ENCODE measurements at regions of chr16 and their contacts with region 1.

Region 1: DNA sequence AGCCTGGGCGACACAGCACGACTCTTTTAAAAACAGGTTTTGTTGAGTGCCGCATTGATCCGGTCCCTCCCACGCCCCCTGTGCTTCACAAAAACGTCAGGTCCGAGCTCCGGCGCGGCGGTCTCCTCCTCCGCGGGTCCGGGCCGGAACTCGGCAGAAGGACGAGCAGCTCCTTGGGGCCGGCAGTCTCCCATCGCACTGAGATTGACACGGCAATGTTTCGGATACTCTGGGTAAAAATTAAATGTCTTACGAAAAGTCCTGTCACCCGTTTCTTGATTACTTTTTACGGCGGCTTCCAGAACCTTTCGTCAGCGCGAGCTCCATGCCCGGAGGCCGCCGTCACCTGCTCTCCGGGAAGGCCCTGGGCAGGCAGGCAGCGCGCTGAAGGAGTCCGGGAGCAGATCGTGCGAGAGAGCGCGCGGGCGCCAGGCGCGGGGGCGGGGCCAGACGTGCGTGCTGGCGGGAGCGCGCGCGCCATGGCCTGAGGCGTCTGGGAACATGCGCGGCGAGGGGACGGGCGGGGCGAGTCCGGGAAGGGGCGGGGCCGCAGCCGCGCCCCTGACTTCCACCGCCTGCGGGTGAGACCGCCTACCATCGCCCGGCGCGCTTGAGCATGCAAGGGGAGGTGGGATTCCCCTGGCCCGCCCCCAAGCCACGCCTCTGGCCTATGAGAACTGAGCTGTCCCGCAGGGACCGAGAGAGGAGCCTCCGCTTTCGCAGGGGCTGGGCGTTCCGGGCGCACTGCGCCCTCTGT is 11.7 kb upstream of the SRL start:
- DNase-seq: peak; percentile 100
- ATAC-seq: peak; percentile 98
- H3K4me3 Mint-ChIP-seq: peak overlapping the region; percentile 96
- H3K27ac Mint-ChIP-seq: peak overlapping the region; percentile 98
- H3K4me1 Mint-ChIP-seq: peaks cover 7% of the 10 kb centered on the region
- H3K27me3 Mint-ChIP-seq: no peaks in the 10 kb centered on the region
- CTCF ChIP-seq: no peak

Region 2: GRCh38 chr16:3938848-3939624 is 314.5 kb before region 1 on chr16:
- CTCF ChIA-PET with region 1: interaction called, 16 read pairs
- POLR2A ChIA-PET with region 1: no interaction called
- intact Hi-C with region 1: no loop called
- DNase-seq: peak; percentile 56
- ATAC-seq: peak; percentile 95
- H3K4me3 Mint-ChIP-seq: no peak overlapping the region
- H3K27ac Mint-ChIP-seq: no peak overlapping the region
- H3K4me1 Mint-ChIP-seq: peaks cover 3% of the 10 kb centered on the region
- H3K27me3 Mint-ChIP-seq: peaks cover 4% of the 10 kb centered on the region
- CTCF ChIP-seq: peak; percentile 98

Region 3: GRCh38 chr16:4116337-4117249 is 137.0 kb before region 1 on chr16 and contains the start of gene ADCY9:
- CTCF ChIA-PET with region 1: interaction called, 10 read pairs
- POLR2A ChIA-PET with region 1: interaction called, 3 read pairs
- intact Hi-C with region 1: no loop called
- DNase-seq: peak; percentile 70
- ATAC-seq: peak; percentile 81
- H3K4me3 Mint-ChIP-seq: peak within 1 kb of the TSS; percentile 74
- H3K27ac Mint-ChIP-seq: no peak within 1 kb of the TSS
- H3K4me1 Mint-ChIP-seq: peaks cover 39% of the 10 kb centered on the region
- H3K27me3 Mint-ChIP-seq: peaks cover 7% of the 10 kb centered on the region
- CTCF ChIP-seq: no peak
- total RNA-seq, gene ADCY9: 4.1 to 4.8 TPM

Region 4: GRCh38 chr16:4239020-4239419 is 14.6 kb before region 1 on chr16:
- CTCF ChIA-PET with region 1: interaction called, 10 read pairs
- POLR2A ChIA-PET with region 1: interaction called, 5 read pairs
- intact Hi-C with region 1: no loop called
- DNase-seq: no peak
- ATAC-seq: no peak
- H3K4me3 Mint-ChIP-seq: no peak overlapping the region
- H3K27ac Mint-ChIP-seq: no peak overlapping the region
- H3K4me1 Mint-ChIP-seq: no peaks in the 10 kb centered on the region
- H3K27me3 Mint-ChIP-seq: peaks cover 10% of the 10 kb centered on the region
- CTCF ChIP-seq: no peak

Region 5: GRCh38 chr16:4288148-4288921 is 34.8 kb after region 1 on chr16:
- CTCF ChIA-PET with region 1: interaction called, 18 read pairs
- POLR2A ChIA-PET with region 1: no interaction called
- intact Hi-C with region 1: no loop called
- DNase-seq: peak; percentile 87
- ATAC-seq: peak; percentile 97
- H3K4me3 Mint-ChIP-seq: no peak overlapping the region
- H3K27ac Mint-ChIP-seq: no peak overlapping the region
- H3K4me1 Mint-ChIP-seq: peaks cover 9% of the 10 kb centered on the region
- H3K27me3 Mint-ChIP-seq: peaks cover 16% of the 10 kb centered on the region
- CTCF ChIP-seq: peak; percentile 99

Region 6: GRCh38 chr16:4330277-4330874 is 76.8 kb after region 1 on chr16:
- CTCF ChIA-PET with region 1: interaction called, 19 read pairs
- POLR2A ChIA-PET with region 1: interaction called, 4 read pairs
- intact Hi-C with region 1: no loop called
- DNase-seq: peak; percentile 83
- ATAC-seq: peak; percentile 80
- H3K4me3 Mint-ChIP-seq: no peak overlapping the region
- H3K27ac Mint-ChIP-seq: no peak overlapping the region
- H3K4me1 Mint-ChIP-seq: peaks cover 4% of the 10 kb centered on the region
- H3K27me3 Mint-ChIP-seq: no peaks in the 10 kb centered on the region
- CTCF ChIP-seq: peak; percentile 97